ENCODE measurements at regions of chr3 and their contacts with region 1.

Region 1: DNA sequence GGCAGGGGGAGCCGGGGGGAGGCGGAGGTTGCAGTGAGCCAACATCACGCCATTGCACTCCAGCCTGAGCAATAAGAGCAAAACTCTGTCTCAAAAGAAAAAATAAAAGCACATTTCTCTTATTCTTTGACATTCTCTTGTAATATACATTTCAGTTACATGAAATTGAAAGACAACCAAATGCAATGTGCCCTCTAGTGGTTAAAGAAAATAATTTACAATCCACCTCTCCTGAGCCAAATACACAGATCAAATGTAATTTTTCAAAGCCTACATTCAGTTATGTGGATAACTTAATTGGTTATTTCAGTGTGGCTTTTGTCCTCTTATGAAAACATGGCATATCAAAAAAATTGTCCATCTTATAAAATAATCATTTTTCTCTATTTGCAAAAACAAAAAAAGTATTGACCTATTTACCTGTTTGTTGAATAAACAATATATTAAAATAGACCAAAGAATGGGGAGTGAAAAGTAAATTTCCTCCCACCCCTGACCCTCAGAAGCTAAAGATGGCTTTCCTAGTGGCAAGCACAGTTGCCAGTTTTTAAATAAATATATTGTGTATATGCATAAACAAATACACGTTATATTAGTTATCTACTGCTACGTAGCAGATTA is 14.2 kb upstream of the U2SURP start:
- DNase-seq: peak in 7 of 9 donors; percentile 13 to 54 (median 36)
- ATAC-seq: peak; percentile 63
- H3K4me3 ChIP-seq: no peak overlapping the region
- H3K4me3 Mint-ChIP-seq: no peak overlapping the region
- H3K27ac ChIP-seq: no peak overlapping the region
- H3K27ac Mint-ChIP-seq: no peak overlapping the region
- H3K4me1 ChIP-seq: no peaks in the 10 kb centered on the region
- H3K4me1 Mint-ChIP-seq: peaks cover 0 to 4% (median 0%) of the 10 kb centered on the region in 7 donors
- H3K27me3 ChIP-seq: no peaks in the 10 kb centered on the region
- H3K27me3 Mint-ChIP-seq: peaks cover 0 to 39% (median 4%) of the 10 kb centered on the region in 5 donors

Region 2: GRCh38 chr3:142129516-142130171 is 857.5 kb before region 1 on chr3:
- CTCF ChIA-PET with region 1: no interaction called
- POLR2A ChIA-PET with region 1: no interaction called
- intact Hi-C with region 1: loop called in 1 of 2 experiments (anchors 2 kb)
- DNase-seq: no peak
- ATAC-seq: no peak
- H3K4me3 ChIP-seq: no peak overlapping the region
- H3K4me3 Mint-ChIP-seq: no peak overlapping the region
- H3K27ac ChIP-seq: no peak overlapping the region
- H3K27ac Mint-ChIP-seq: peak overlapping the region in 2 of 9 donors; percentile 31 to 55
- H3K4me1 ChIP-seq: no peaks in the 10 kb centered on the region
- H3K4me1 Mint-ChIP-seq: peaks cover 3 to 28% (median 10%) of the 10 kb centered on the region in 7 donors
- H3K27me3 ChIP-seq: no peaks in the 10 kb centered on the region
- H3K27me3 Mint-ChIP-seq: no peaks in the 10 kb centered on the region

Region 3: GRCh38 chr3:142586803-142587406 is 400.3 kb before region 1 on chr3:
- CTCF ChIA-PET with region 1: interaction called, 7 read pairs
- POLR2A ChIA-PET with region 1: no interaction called
- intact Hi-C with region 1: loop called (anchors 1 kb)
- DNase-seq: peak in 7 of 9 donors; percentile 15 to 51 (median 28)
- ATAC-seq: peak; percentile 74
- H3K4me3 ChIP-seq: no peak overlapping the region
- H3K4me3 Mint-ChIP-seq: no peak overlapping the region
- H3K27ac ChIP-seq: no peak overlapping the region
- H3K27ac Mint-ChIP-seq: no peak overlapping the region
- H3K4me1 ChIP-seq: no peaks in the 10 kb centered on the region
- H3K4me1 Mint-ChIP-seq: no peaks in the 10 kb centered on the region
- H3K27me3 ChIP-seq: no peaks in the 10 kb centered on the region
- H3K27me3 Mint-ChIP-seq: peaks cover 6 to 49% (median 16%) of the 10 kb centered on the region in 5 donors

Region 4: GRCh38 chr3:142828703-142829305 is 158.4 kb before region 1 on chr3:
- CTCF ChIA-PET with region 1: no interaction called
- POLR2A ChIA-PET with region 1: no interaction called
- intact Hi-C with region 1: loop called (anchors 2 kb)
- DNase-seq: peak in 8 of 9 donors; percentile 1 to 59 (median 18)
- ATAC-seq: peak; percentile 92
- H3K4me3 ChIP-seq: no peak overlapping the region
- H3K4me3 Mint-ChIP-seq: no peak overlapping the region
- H3K27ac ChIP-seq: no peak overlapping the region
- H3K27ac Mint-ChIP-seq: no peak overlapping the region
- H3K4me1 ChIP-seq: no peaks in the 10 kb centered on the region
- H3K4me1 Mint-ChIP-seq: peaks cover 0 to 3% (median 0%) of the 10 kb centered on the region in 7 donors
- H3K27me3 ChIP-seq: no peaks in the 10 kb centered on the region
- H3K27me3 Mint-ChIP-seq: peaks cover 2 to 22% (median 5%) of the 10 kb centered on the region in 5 donors

Region 5: DNA sequence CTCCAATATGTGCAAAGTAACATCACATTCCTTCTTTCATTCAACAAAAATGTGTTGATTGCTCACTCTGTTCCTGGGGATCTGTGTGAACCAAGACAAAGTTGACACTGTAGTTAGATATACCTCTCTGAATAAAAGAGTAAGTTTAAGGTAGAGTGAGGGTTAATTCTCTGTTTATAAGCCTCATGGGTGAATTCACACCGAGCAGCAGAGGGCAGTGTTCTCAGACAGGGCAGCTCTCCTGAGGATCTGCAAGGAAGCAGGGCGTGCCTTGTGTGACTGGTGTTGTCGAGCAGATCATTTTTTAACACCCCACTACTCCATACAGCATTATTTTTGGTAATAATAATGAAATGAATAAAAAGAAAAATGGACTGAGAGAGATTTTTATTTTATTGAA is 58.1 kb before region 1 on chr3:
- CTCF ChIA-PET with region 1: no interaction called
- POLR2A ChIA-PET with region 1: no interaction called
- intact Hi-C with region 1: loop called in 1 of 2 experiments (anchors 2 kb)
- DNase-seq: peak in 2 of 9 donors; percentile 9 to 12
- ATAC-seq: peak; percentile 71
- H3K4me3 ChIP-seq: no peak overlapping the region
- H3K4me3 Mint-ChIP-seq: no peak overlapping the region
- H3K27ac ChIP-seq: no peak overlapping the region
- H3K27ac Mint-ChIP-seq: no peak overlapping the region
- H3K4me1 ChIP-seq: no peaks in the 10 kb centered on the region
- H3K4me1 Mint-ChIP-seq: no peaks in the 10 kb centered on the region
- H3K27me3 ChIP-seq: no peaks in the 10 kb centered on the region
- H3K27me3 Mint-ChIP-seq: peaks cover 15 to 42% (median 33%) of the 10 kb centered on the region in 5 donors

Region 6: DNA sequence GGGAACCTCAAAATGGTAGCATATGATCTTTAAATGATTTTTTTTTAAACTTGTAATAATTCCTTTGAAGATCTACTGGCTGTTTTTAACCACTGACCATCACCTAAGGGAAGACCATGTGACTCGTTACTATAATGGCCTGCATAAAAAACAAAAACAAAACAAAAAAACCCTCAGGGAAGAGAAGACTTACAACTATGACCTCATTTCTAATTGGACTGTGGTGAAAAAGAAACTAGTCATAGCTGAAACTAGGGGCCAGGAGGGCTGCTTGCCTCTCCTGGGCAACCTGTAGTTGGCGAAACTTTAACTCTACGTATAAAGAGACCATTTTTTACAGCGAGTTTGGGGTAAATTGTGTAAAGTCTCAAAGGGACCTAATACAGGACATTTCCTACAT is 46.7 kb before region 1 on chr3:
- CTCF ChIA-PET with region 1: no interaction called
- POLR2A ChIA-PET with region 1: no interaction called
- intact Hi-C with region 1: no loop called
- DNase-seq: no peak
- ATAC-seq: no peak
- H3K4me3 ChIP-seq: no peak overlapping the region
- H3K4me3 Mint-ChIP-seq: no peak overlapping the region
- H3K27ac ChIP-seq: no peak overlapping the region
- H3K27ac Mint-ChIP-seq: no peak overlapping the region
- H3K4me1 ChIP-seq: no peaks in the 10 kb centered on the region
- H3K4me1 Mint-ChIP-seq: peaks cover 0 to 10% (median 0%) of the 10 kb centered on the region in 7 donors
- H3K27me3 ChIP-seq: no peaks in the 10 kb centered on the region
- H3K27me3 Mint-ChIP-seq: peaks cover 10 to 21% (median 17%) of the 10 kb centered on the region in 5 donors